CD4-positive, alpha-beta memory T cell (primary cell): ENCODE measurements at regions of chr1 and their contacts with region 1.

Region 1: DNA sequence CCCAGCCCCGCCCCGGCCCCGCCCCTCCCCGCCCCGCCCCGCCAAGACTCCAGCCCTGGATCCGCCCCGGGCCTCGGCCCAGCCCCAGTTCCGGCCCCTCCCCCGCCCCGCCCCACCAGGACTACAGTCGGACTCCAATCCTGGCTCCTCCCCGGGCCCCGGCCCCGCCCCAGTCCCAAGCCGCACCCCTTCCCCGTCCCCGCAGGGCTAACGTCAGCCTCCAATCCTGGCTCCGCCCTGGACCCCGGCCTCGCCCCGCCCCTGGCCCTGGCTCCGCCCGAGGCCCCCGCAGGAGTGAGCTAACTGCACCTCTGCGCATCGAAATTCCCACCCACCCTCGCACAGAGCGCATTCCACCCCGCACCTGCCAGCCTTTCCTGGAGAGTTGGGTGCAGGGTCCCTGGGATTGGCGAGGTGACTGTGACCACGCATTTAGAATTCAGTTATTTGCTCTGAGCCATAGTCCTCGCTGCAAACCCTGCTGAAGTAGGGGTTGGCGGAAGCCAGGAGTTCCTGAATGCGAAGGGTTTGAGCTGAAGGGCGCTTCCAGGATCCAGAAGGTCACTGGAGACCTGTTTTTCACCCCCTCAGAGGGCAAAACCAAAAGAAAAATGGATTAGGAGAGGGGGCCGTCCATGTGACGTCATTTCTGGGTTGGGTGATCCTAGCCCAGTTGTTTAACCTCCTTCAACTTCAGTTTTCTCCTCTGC is 588 bp upstream of the IGSF8 start:
- DNase-seq: peak; percentile 95 to 98 (median 95)
- H3K4me3 ChIP-seq: peak overlapping the region; percentile 74
- H3K4me3 Mint-ChIP-seq: peak overlapping the region; percentile 78 to 87 (median 82)
- H3K27ac ChIP-seq: peak overlapping the region; percentile 96
- H3K27ac Mint-ChIP-seq: peak overlapping the region; percentile 93 to 98 (median 97)
- H3K4me1 ChIP-seq: peaks cover 55% of the 10 kb centered on the region
- H3K4me1 Mint-ChIP-seq: peaks cover 24 to 63% (median 46%) of the 10 kb centered on the region in 4 donors
- H3K27me3 ChIP-seq: no peaks in the 10 kb centered on the region
- H3K27me3 Mint-ChIP-seq: peaks cover 0 to 2% of the 10 kb centered on the region in 2 donors

Region 2: GRCh38 chr1:159924981-159925712 is 173.9 kb before region 1 on chr1 and contains the start of gene TAGLN2:
- CTCF ChIA-PET with region 1: interaction called, 4 read pairs
- POLR2A ChIA-PET with region 1: interaction called, 13 read pairs
- intact Hi-C with region 1: loop called (anchors 5 kb)
- DNase-seq: peak; percentile 87 to 91 (median 89)
- H3K4me3 ChIP-seq: peak within 1 kb of the TSS; percentile 89 to 93
- H3K4me3 Mint-ChIP-seq: peak within 1 kb of the TSS; percentile 94 to 99 (median 98)
- H3K27ac ChIP-seq: peak within 1 kb of the TSS; percentile 98
- H3K27ac Mint-ChIP-seq: peak within 1 kb of the TSS; percentile 99 to 100 (median 100)
- H3K4me1 ChIP-seq: peaks cover 41% of the 10 kb centered on the region
- H3K4me1 Mint-ChIP-seq: peaks cover 29 to 63% (median 41%) of the 10 kb centered on the region in 4 donors
- H3K27me3 ChIP-seq: no peaks in the 10 kb centered on the region
- H3K27me3 Mint-ChIP-seq: peaks cover 0 to 5% of the 10 kb centered on the region in 2 donors
- total RNA-seq, gene TAGLN2: 196 to 207 TPM

Region 3: GRCh38 chr1:160078512-160079195 is 20.4 kb before region 1 on chr1:
- CTCF ChIA-PET with region 1: interaction called, 20 read pairs
- POLR2A ChIA-PET with region 1: interaction called, 7 read pairs
- intact Hi-C with region 1: no loop called
- DNase-seq: peak; percentile 45 to 57 (median 54)
- H3K4me3 ChIP-seq: no peak overlapping the region
- H3K4me3 Mint-ChIP-seq: no peak overlapping the region
- H3K27ac ChIP-seq: no peak overlapping the region
- H3K27ac Mint-ChIP-seq: no peak overlapping the region
- H3K4me1 ChIP-seq: no peaks in the 10 kb centered on the region
- H3K4me1 Mint-ChIP-seq: peaks cover 0 to 12% (median 4%) of the 10 kb centered on the region in 4 donors
- H3K27me3 ChIP-seq: peaks cover 38% of the 10 kb centered on the region
- H3K27me3 Mint-ChIP-seq: peaks cover 51 to 60% of the 10 kb centered on the region in 2 donors

Region 4: DNA sequence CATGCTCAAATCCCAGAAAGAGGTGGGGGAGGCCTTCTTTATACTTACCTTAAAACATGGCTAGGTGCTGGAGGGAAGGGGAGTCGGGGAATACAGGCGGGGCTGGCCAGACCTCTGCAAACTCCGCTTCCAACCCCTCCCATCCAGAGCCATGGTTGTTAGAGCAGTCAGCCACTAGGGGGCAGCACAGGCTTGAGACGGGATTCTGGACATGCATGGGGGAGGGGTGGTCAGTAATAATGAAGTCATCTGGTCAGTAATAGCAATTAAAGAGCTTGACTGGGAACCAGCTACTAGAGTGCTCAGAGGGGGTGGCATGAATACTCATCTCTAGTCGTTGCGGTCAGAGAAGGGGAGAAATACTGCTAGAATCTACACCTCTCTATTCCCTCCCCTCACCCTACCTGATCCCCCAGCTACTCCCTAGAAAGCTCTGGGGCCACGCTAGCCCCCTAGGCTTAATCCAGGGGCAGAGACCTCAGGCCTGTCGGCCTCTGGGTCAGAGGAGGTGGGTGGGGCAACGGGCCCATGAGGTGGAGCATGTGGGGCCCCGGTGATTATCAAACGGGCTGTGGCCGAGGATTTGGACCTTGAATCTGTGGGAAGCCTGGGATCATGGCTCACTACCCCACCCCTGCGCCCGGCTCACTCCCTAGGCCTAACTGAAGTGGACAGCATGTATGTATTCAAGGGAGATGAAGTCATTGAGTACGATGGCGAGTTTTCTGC is 94.2 kb after region 1 on chr1:
- CTCF ChIA-PET with region 1: interaction called, 3 read pairs
- POLR2A ChIA-PET with region 1: no interaction called
- intact Hi-C with region 1: loop called (anchors 1 kb)
- DNase-seq: peak; percentile 67 to 75 (median 68)
- H3K4me3 ChIP-seq: no peak overlapping the region
- H3K4me3 Mint-ChIP-seq: no peak overlapping the region
- H3K27ac ChIP-seq: no peak overlapping the region
- H3K27ac Mint-ChIP-seq: no peak overlapping the region
- H3K4me1 ChIP-seq: peaks cover 9% of the 10 kb centered on the region
- H3K4me1 Mint-ChIP-seq: no peaks in the 10 kb centered on the region
- H3K27me3 ChIP-seq: no peaks in the 10 kb centered on the region
- H3K27me3 Mint-ChIP-seq: peaks cover 1 to 3% of the 10 kb centered on the region in 2 donors

Region 5: GRCh38 chr1:160261893-160262794 is 163.1 kb after region 1 on chr1 and contains the start of gene DCAF8:
- CTCF ChIA-PET with region 1: interaction called, 7 read pairs
- POLR2A ChIA-PET with region 1: interaction called, 28 read pairs
- intact Hi-C with region 1: loop called (anchors 1 kb)
- DNase-seq: peak; percentile 96 to 98 (median 97)
- H3K4me3 ChIP-seq: peak within 1 kb of the TSS; percentile 84 to 91
- H3K4me3 Mint-ChIP-seq: peak within 1 kb of the TSS; percentile 93 to 100 (median 96)
- H3K27ac ChIP-seq: peak within 1 kb of the TSS; percentile 96
- H3K27ac Mint-ChIP-seq: peak within 1 kb of the TSS; percentile 96 to 100 (median 99)
- H3K4me1 ChIP-seq: peaks cover 42% of the 10 kb centered on the region
- H3K4me1 Mint-ChIP-seq: peaks cover 21 to 61% (median 44%) of the 10 kb centered on the region in 4 donors
- H3K27me3 ChIP-seq: no peaks in the 10 kb centered on the region
- H3K27me3 Mint-ChIP-seq: no peaks in the 10 kb centered on the region
- total RNA-seq, gene DCAF8: 211 to 223 TPM

Region 6: DNA sequence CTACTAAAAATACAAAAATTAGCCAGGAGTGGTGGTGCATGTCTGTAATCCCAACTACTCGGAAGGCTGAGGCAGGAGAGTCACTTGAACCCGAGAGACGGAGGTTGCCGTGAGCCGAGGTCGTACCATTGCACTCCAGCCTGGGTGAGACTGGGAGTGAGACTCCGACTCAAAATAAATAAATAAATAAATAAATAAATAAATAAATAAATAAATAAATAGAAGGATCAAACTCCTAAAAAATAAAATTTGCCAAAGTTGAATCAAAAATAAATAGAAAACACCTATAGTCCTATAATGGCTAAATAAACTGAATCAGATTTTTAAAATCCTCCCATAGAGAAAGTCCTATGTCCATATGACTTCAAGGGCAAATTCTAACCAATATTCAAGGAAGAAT is 201.2 kb after region 1 on chr1:
- CTCF ChIA-PET with region 1: no interaction called
- POLR2A ChIA-PET with region 1: no interaction called
- intact Hi-C with region 1: no loop called
- DNase-seq: no peak
- H3K4me3 ChIP-seq: no peak overlapping the region
- H3K4me3 Mint-ChIP-seq: no peak overlapping the region
- H3K27ac ChIP-seq: no peak overlapping the region
- H3K27ac Mint-ChIP-seq: peak overlapping the region in 1 of 7 donors; percentile 36
- H3K4me1 ChIP-seq: no peaks in the 10 kb centered on the region
- H3K4me1 Mint-ChIP-seq: peaks cover 0 to 2% (median 0%) of the 10 kb centered on the region in 4 donors
- H3K27me3 ChIP-seq: no peaks in the 10 kb centered on the region
- H3K27me3 Mint-ChIP-seq: no peaks in the 10 kb centered on the region

Region 7: DNA sequence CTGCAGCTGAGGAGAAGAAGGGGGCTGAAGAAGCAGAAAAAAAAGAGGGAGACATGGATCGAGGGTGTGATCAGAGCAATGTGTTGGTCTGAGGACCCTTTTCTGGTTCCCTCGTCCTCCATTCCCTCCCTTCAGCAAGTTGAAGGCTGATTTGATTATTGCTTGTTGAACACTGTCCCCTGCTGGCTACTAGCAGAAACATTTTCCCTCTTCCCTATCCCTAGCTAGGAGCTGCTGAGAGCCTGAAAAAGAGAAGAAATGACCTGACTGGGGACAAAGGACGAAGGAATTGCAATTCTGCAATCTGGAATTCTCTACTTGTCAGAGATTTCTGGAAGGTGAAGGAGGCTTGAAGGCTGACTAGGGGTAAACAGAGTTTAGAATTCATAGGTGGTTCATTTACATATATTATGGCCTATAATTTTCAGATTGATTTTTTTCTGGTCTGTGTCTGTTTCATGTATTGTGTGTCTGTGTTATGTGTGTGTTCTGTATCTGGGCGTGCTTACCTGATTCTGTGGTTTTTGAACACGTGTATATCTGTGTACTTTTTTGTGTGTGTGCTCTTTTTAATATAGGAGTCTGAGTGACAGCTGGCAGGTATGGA is 277.6 kb after region 1 on chr1:
- CTCF ChIA-PET with region 1: interaction called, 23 read pairs
- POLR2A ChIA-PET with region 1: no interaction called
- intact Hi-C with region 1: loop called (anchors 1 kb)
- DNase-seq: peak in 4 of 5 donors; percentile 39 to 46 (median 44)
- H3K4me3 ChIP-seq: no peak overlapping the region
- H3K4me3 Mint-ChIP-seq: peak overlapping the region in 3 of 8 donors; percentile 17 to 62 (median 48)
- H3K27ac ChIP-seq: no peak overlapping the region
- H3K27ac Mint-ChIP-seq: peak overlapping the region in 1 of 7 donors; percentile 31
- H3K4me1 ChIP-seq: peaks cover 14% of the 10 kb centered on the region
- H3K4me1 Mint-ChIP-seq: peaks cover 9 to 16% (median 12%) of the 10 kb centered on the region in 4 donors
- H3K27me3 ChIP-seq: no peaks in the 10 kb centered on the region
- H3K27me3 Mint-ChIP-seq: peaks cover 0 to 1% of the 10 kb centered on the region in 2 donors

Region 8: DNA sequence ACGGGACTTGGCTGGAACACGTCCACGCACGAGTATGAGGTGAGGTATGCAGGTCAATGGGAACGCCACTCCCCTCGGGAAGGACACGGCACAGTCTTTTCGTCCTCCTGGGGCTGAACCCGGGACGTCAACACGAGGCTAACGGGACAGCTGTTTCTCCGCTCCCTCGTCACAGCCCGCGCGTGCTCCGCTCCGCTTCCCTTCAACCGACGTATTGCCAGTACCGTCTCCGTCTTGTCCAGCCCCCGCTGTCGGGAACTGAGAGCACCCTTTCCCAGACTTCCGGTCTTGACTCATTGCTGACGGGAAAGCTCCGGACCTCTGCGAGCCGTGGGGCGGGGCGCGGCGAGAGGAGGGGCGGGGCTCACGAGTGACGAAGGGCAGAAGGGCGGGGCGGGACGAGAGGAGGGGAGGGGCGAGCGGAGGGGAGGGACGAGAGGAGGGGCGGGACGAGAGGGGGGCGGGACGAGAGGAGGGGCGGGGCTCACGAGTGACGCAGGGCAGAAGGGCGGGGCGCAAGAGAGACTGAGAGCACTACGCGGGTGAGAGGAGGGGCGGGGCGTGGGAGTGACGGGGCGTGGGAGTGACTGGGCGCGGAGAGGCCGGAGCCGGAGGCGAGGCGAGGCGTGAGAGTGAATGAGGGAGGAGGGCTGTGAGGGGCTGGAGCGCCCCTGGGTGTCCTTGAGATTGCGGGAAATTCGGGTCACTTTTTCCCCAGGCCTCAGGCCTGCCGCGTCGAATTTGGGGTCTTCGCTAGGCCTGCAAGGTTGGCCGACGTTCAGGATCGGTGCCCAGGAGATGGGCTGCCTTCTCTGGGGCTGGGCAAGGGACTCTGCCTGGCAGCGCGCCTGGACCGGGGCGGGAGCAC is 1290.9 kb after region 1 on chr1:
- CTCF ChIA-PET with region 1: no interaction called
- POLR2A ChIA-PET with region 1: no interaction called
- intact Hi-C with region 1: loop called (anchors 2 kb)
- DNase-seq: peak; percentile 91 to 96 (median 92)
- H3K4me3 ChIP-seq: peak overlapping the region; percentile 79 to 86
- H3K4me3 Mint-ChIP-seq: peak overlapping the region; percentile 84 to 95 (median 94)
- H3K27ac ChIP-seq: peak overlapping the region; percentile 87
- H3K27ac Mint-ChIP-seq: peak overlapping the region; percentile 94 to 99 (median 97)
- H3K4me1 ChIP-seq: peaks cover 29% of the 10 kb centered on the region
- H3K4me1 Mint-ChIP-seq: peaks cover 12 to 48% (median 33%) of the 10 kb centered on the region in 4 donors
- H3K27me3 ChIP-seq: no peaks in the 10 kb centered on the region
- H3K27me3 Mint-ChIP-seq: no peaks in the 10 kb centered on the region